ENCODE measurements at regions of chr6 and their contacts with region 1.

Region 1: DNA sequence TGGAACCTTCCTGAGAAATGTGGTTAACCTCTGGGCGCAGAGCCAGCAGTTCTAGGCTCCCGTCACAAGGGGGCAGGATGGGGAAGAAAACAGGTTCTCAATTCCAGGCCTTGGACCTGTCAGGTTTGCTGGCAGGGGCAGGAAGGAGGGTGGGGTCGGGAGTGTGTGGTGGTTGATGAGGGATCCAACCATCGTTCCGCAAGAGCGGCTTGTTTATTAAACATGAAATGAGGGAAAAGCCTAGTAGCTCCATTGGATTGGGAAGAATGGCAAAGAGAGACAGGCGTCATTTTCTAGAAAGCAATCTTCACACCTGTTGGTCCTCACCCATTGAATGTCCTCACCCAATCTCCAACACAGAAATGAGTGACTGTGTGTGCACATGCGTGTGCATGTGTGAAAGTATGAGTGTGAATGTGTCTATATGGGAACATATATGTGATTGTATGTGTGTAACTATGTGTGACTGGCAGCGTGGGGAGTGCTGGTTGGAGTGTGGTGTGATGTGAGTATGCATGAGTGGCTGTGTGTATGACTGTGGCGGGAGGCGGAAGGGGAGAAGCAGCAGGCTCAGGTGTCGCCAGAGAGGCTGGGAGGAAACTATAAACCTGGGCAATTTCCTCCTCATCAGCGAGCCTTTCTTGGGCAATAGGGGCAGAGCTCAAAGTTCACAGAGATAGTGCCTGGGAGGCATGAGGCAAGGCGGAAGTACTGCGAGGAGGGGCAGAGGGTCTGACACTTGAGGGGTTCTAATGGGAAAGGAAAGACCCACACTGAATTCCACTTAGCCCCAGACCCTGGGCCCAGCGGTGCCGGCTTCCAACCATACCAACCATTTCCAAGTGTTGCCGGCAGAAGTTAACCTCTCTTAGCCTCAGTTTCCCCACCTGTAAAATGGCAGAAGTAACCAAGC is 29.6 kb downstream of the SRSF3 start:
- DNase-seq: peak; percentile 93
- H3K4me3 ChIP-seq: no peak overlapping the region
- H3K27ac ChIP-seq: peak overlapping the region in 3 of 5 donors; percentile 38 to 53 (median 53)
- H3K4me1 ChIP-seq: peaks cover 28 to 54% (median 44%) of the 10 kb centered on the region in 4 donors
- H3K27me3 ChIP-seq: no peaks in the 10 kb centered on the region
- CTCF ChIP-seq: peak in 5 of 7 experiments; percentile 84 to 95 (median 90)
- EP300 ChIP-seq: no peak
- POLR2A ChIP-seq: no peak

Region 2: DNA sequence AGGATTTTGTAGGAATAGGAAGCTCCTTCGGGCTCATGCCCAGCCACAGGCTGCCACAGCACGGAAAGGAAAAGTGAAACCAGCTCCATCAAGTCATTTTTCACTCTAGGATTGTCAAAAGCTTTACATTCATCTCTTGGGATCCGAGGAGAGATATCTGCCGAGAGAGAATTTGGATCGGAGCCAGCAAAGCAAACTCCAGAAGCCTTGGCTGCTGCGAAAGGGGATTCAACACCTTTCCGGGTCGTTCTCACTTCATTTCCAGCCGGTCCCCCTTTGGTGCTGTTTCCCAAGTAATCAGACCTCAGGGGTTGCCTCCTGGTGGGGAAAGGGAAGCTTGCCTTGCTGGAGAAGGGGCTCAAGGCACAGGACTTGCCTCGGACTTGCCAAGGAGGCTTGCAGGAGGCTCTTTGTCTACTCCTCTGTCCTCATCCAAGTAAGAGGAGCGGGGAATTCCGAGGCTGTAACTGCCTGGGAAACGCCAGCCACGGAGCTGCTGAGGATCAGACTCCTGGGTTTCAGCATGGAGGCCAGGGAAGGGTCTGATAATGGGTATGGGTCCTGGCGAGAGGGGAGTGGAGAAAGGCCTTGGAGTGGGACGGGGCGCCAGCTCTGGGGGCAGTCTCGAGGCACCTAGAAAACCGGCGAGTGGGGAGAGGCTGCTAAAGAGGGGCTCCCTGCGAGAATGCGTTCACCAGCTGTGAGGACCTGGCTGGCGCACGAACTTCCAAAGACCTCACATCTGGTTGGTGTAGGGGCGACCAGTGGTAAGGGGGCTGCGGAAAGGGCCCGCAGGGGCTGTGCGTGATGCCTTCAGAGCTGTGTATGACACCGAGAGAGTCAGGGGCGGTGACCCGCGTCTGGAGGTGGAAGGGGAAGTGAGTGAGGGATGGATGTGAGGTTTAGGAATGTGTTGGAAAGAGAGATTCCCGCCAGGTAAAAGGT is 237.0 kb before region 1 on chr6:
- intact Hi-C with region 1: no loop called
- DNase-seq: peak; percentile 43 to 77
- H3K4me3 ChIP-seq: peak overlapping the region; percentile 55 to 86 (median 70)
- H3K27ac ChIP-seq: peak overlapping the region; percentile 9 to 77 (median 67)
- H3K4me1 ChIP-seq: peaks cover 0 to 26% (median 22%) of the 10 kb centered on the region in 4 donors
- H3K27me3 ChIP-seq: peaks cover 0 to 12% (median 0%) of the 10 kb centered on the region in 3 donors
- CTCF ChIP-seq: no peak
- EP300 ChIP-seq: no peak
- POLR2A ChIP-seq: no peak

Region 3: DNA sequence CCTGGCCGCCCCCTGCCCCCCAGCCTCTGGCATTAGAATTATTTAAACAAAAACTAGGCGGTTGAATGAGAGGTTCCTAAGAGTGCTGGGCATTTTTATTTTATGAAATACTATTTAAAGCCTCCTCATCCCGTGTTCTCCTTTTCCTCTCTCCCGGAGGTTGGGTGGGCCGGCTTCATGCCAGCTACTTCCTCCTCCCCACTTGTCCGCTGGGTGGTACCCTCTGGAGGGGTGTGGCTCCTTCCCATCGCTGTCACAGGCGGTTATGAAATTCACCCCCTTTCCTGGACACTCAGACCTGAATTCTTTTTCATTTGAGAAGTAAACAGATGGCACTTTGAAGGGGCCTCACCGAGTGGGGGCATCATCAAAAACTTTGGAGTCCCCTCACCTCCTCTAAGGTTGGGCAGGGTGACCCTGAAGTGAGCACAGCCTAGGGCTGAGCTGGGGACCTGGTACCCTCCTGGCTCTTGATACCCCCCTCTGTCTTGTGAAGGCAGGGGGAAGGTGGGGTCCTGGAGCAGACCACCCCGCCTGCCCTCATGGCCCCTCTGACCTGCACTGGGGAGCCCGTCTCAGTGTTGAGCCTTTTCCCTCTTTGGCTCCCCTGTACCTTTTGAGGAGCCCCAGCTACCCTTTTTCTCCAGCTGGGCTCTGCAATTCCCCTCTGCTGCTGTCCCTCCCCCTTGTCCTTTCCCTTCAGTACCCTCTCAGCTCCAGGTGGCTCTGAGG is 62.3 kb after region 1 on chr6:
- intact Hi-C with region 1: loop called (anchors 5 kb)
- DNase-seq: peak in 1 of 2 donors; percentile 1
- H3K4me3 ChIP-seq: no peak overlapping the region
- H3K27ac ChIP-seq: no peak overlapping the region
- H3K4me1 ChIP-seq: peaks cover 20 to 52% (median 33%) of the 10 kb centered on the region in 4 donors
- H3K27me3 ChIP-seq: no peaks in the 10 kb centered on the region
- CTCF ChIP-seq: no peak
- EP300 ChIP-seq: no peak
- POLR2A ChIP-seq: no peak

Region 4: GRCh38 chr6:36759148-36759759 is 135.5 kb after region 1 on chr6:
- intact Hi-C with region 1: loop called (anchors 10 kb)
- DNase-seq: peak; percentile 88 to 94
- H3K4me3 ChIP-seq: no peak overlapping the region
- H3K27ac ChIP-seq: no peak overlapping the region
- H3K4me1 ChIP-seq: peaks cover 0 to 41% (median 25%) of the 10 kb centered on the region in 4 donors
- H3K27me3 ChIP-seq: no peaks in the 10 kb centered on the region
- CTCF ChIP-seq: peak in 5 of 7 experiments; percentile 87 to 99 (median 98)
- EP300 ChIP-seq: no peak
- POLR2A ChIP-seq: no peak